ENCODE measurements at regions of chr3 and their contacts with region 1.

Region 1: DNA sequence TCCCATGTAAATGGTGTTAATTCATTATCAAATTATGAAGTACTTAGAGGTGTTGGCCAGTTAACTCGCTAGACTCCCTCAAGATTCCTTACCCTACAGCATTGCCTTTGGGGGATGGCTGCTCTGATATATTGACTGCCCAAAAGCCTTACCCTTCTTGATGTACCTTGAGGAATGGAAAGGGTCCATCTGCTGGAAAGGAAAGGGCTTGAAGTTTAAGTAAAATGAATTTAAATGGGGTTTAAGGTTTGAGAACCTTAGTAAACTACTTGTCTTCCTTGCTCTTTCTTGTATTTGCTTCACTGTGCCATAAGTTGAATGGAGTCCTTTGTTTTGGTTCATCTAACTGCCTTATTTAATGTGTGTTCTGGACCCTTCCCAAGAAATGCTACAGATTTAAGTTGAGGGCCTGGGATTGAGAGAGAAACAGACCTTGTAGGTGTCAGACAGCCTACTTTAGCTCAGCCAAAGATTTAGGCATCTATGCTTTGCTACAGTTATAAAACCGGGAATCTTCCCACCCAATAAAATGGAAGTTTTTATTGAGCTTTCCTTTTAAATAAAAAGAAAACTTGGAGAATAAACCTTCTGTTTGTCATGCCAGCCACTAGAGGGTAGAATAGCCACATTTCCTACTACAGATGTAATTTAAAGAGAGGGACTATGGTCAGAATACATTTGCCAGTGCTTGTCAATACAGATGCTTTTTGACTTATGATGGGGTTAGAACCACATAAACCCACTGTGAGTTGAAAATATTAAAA is 25.3 kb downstream of the CMSS1 start:
- DNase-seq: no peak
- H3K4me3 Mint-ChIP-seq: no peak overlapping the region
- H3K27ac Mint-ChIP-seq: no peak overlapping the region
- H3K4me1 Mint-ChIP-seq: peaks cover 10% of the 10 kb centered on the region
- H3K27me3 Mint-ChIP-seq: no peaks in the 10 kb centered on the region

Region 2: DNA sequence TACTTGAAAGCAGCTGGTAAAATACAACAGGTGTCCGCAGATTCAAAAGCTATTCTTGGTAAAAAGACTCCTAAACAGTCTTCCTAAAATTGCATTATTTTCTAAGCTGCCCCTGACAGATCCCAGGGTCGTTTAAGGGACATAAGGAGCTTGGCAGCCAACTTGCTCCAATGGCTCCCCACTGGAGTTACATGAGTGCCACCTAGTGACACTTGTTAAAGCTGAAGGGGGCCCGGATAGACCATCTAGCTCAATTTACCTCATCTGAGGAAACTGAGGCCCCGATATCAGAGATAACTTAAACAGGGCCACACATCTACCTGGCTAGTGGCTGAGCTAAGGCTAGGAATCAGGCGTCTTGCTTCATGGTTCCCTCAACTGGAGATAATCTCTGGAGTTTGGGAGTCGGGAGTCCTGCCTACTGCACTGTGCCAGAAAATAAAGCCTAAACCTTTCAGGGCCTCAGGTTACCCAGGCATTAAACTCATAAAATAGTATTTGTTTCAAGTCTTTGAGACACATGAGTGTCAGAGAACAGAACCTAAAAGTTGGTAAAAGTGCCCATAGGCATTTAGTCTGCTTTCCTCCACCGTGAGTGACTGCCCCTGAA is 411.3 kb after region 1 on chr3:
- CTCF ChIA-PET with region 1: interaction called, 21 read pairs
- POLR2A ChIA-PET with region 1: no interaction called
- intact Hi-C with region 1: loop called (anchors 1 kb)
- DNase-seq: peak; percentile 51
- H3K4me3 Mint-ChIP-seq: no peak overlapping the region
- H3K27ac Mint-ChIP-seq: no peak overlapping the region
- H3K4me1 Mint-ChIP-seq: peaks cover 8% of the 10 kb centered on the region
- H3K27me3 Mint-ChIP-seq: no peaks in the 10 kb centered on the region

Measured in activated CD4-positive, alpha-beta memory T cell treated with anti-CD3 and anti-CD28 coated beads for 36 hours (primary cell).